ENCODE measurements at regions of chr2 and their contacts with region 1.

Region 1: DNA sequence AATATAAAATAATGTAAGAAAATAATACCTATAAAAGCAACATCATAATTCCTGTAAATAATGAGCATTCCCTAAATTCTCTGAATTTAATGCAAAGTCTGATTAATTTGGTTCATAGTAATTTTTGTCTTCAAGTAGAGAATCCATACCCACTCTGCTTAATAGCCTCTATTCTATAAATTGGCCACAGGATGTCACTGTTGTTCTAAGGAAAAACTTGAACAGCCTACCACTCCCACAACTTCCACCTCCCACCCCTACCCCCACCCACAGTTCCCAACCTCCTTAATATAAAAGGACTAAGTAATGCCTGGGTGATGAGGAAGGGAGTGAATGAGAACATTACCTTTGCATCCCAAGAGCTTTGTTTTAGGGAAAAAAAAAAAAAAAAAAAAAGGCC is 27.2 kb upstream of the BBS5 start:
- DNase-seq: no peak
- H3K4me3 ChIP-seq: no peak overlapping the region
- H3K27ac ChIP-seq: no peak overlapping the region
- H3K27me3 ChIP-seq: no peaks in the 10 kb centered on the region
- CTCF ChIP-seq: peak; percentile 55

Region 2: DNA sequence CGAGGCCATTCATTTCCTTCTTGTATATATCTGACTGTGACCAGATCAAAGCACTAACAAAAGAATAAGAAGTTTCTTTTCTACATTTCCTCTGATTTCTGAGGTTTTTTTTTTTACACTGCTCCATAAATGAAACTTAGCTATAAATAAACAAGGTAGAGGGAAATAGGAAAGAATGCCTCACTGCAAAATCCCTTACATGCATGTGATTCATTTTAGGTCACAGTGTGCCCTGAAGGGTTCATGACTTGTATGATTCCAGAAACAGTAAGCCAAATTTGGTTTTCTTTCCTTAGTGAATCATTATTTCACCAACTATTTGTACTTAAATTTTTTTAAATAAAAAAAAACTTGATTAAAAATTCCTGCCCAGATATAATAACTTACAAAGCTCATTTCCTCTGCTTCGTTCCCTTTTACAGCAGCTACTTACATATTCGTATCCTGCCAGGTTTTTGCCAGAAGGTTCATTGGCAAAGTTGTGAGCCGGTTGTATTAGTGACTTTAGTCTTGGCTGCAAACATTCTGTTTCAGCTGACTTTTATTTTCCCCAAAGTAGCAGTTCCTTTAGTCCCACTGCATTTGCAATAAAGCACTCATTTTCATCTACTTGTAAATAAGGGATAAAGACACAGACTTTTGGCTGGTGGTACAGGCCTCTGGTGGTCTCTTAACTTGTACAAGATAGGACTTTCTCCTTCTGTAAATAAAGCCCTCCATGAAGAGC is 148.3 kb before region 1 on chr2:
- CTCF ChIA-PET with region 1: interaction called, 10 read pairs
- POLR2A ChIA-PET with region 1: no interaction called
- DNase-seq: no peak
- H3K4me3 ChIP-seq: no peak overlapping the region
- H3K27ac ChIP-seq: no peak overlapping the region
- H3K27me3 ChIP-seq: no peaks in the 10 kb centered on the region
- CTCF ChIP-seq: no peak

Region 3: GRCh38 chr2:169462896-169463695 is 11.0 kb after region 1 on chr2:
- CTCF ChIA-PET with region 1: interaction called, 36 read pairs
- POLR2A ChIA-PET with region 1: interaction called, 4 read pairs
- DNase-seq: peak; percentile 61
- H3K4me3 ChIP-seq: no peak overlapping the region
- H3K27ac ChIP-seq: peak overlapping the region; percentile 49
- H3K27me3 ChIP-seq: no peaks in the 10 kb centered on the region
- CTCF ChIP-seq: no peak

Region 4: GRCh38 chr2:169528271-169528701 is 76.2 kb after region 1 on chr2:
- CTCF ChIA-PET with region 1: interaction called, 15 read pairs
- POLR2A ChIA-PET with region 1: no interaction called
- DNase-seq: no peak
- H3K4me3 ChIP-seq: no peak overlapping the region
- H3K27ac ChIP-seq: no peak overlapping the region
- H3K27me3 ChIP-seq: no peaks in the 10 kb centered on the region
- CTCF ChIP-seq: peak; percentile 86

Region 5: GRCh38 chr2:169776252-169776761 is 324.2 kb after region 1 on chr2:
- CTCF ChIA-PET with region 1: interaction called, 20 read pairs
- POLR2A ChIA-PET with region 1: interaction called, 4 read pairs
- DNase-seq: no peak
- H3K4me3 ChIP-seq: no peak overlapping the region
- H3K27ac ChIP-seq: no peak overlapping the region
- H3K27me3 ChIP-seq: no peaks in the 10 kb centered on the region
- CTCF ChIP-seq: no peak

Region 6: GRCh38 chr2:169877398-169877797 is 425.3 kb after region 1 on chr2:
- CTCF ChIA-PET with region 1: interaction called, 20 read pairs
- POLR2A ChIA-PET with region 1: no interaction called
- DNase-seq: no peak
- H3K4me3 ChIP-seq: no peak overlapping the region
- H3K27ac ChIP-seq: no peak overlapping the region
- H3K27me3 ChIP-seq: no peaks in the 10 kb centered on the region
- CTCF ChIP-seq: peak; percentile 54

Region 7: GRCh38 chr2:169933124-169933711 is 481.1 kb after region 1 on chr2:
- CTCF ChIA-PET with region 1: interaction called, 34 read pairs
- POLR2A ChIA-PET with region 1: interaction called, 6 read pairs
- DNase-seq: no peak
- H3K4me3 ChIP-seq: no peak overlapping the region
- H3K27ac ChIP-seq: no peak overlapping the region
- H3K27me3 ChIP-seq: no peaks in the 10 kb centered on the region
- CTCF ChIP-seq: peak; percentile 88

Region 8: GRCh38 chr2:169961911-169962310 is 509.8 kb after region 1 on chr2:
- CTCF ChIA-PET with region 1: no interaction called
- POLR2A ChIA-PET with region 1: no interaction called
- DNase-seq: peak; percentile 15
- H3K4me3 ChIP-seq: no peak overlapping the region
- H3K27ac ChIP-seq: no peak overlapping the region
- H3K27me3 ChIP-seq: no peaks in the 10 kb centered on the region
- CTCF ChIP-seq: no peak